AG04450 (cell line): ENCODE measurements at regions of chr2 and their contacts with region 1.

Region 1: DNA sequence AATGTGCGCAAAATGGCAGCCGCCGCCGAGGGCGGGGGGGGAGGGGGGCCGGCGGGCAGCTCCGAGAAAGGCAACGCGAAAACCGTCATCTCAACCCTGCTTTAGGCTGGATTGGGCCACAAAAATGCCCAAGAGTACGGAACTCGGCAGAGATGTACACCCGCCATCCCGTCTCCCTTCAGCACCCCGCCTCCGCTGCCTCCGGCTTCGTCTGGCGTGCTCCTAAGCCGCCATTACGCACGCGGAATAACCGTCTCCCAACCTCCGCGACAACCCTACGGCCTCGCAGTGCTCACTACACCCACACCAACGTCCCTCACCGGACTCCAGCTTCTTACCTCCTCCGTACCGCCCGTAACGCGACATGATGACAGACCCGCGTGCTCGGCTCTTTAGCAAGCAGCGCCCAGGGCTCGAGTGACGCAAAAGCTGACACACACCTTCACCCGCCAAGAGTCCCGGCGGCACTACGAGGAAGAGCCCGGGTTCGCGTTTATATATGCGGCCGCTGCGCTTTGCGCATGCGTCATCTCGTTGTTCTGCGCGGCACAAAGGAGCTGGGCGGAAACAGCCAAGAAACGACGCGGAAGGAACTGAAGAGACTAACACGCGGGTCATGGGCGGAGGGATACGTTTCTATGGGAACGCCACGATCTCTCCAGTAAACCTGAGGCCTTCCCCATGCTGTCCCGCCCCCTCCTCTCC is at the start of gene SRSF7:
- DNase-seq: peak; percentile 98
- H3K4me3 ChIP-seq: peak within 1 kb of the TSS; percentile 100
- H3K27ac ChIP-seq: peak within 1 kb of the TSS; percentile 85
- H3K27me3 ChIP-seq: no peaks in the 10 kb centered on the region
- CTCF ChIP-seq: no peak
- polyA plus RNA-seq, gene SRSF7: 195 and 238 TPM in 2 replicates

Region 2: DNA sequence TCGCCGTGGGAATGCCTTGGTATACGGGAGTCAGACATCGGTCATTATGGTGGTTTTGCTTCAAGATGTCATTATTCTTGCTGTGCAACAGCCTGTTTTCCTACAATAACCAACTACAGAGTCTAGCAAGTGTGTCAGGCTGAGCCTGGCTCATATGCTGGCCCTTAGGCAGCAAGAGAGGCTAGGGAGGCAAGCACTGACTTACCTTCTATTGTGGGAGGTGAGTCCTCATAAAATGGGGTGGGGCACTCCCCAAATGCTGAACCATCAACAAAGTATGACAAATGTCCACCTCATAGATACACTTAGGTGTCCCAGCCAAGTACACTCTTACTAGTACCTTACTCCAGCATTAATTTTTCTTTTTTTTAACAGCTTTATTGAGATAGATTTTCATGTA is 297.0 kb before region 1 on chr2:
- CTCF ChIA-PET with region 1: no interaction called
- POLR2A ChIA-PET with region 1: no interaction called
- DNase-seq: no peak
- H3K4me3 ChIP-seq: no peak overlapping the region
- H3K27ac ChIP-seq: no peak overlapping the region
- H3K27me3 ChIP-seq: peaks cover 35% of the 10 kb centered on the region
- CTCF ChIP-seq: no peak

Region 3: DNA sequence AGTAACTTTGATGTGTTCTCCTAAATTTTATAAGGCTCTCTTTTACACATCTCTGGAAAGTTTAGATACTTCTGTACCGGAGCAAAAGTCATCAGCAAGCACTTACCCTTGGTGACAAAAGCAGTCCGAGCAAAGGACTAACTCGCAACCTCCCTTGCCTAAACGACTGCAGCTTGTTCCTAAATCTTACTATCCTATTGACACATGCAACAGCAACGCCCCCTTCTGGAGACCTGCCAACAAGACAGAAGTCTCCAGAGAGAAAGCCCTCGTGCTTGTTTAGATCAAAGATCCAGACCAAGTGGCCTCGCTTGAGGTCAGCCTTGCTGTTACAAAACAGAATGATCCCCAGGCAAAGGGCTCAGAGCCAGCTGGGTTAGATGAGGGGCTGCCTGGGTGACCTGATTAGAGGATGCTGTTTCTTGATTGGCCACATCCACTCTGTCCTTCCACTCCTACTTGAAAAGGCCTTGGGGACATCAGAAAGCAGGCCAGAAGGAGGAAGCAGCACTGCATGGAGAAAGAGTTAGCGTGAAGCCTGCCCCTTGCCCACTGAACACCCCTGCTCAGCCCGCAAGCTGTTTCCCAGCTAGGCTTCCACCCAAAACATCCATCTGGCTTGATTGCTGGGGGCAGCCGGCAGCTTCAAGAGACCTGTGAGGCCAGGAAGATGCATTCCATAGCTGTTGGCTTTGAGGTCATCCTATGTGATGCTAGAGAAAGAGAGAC is 242.6 kb before region 1 on chr2:
- CTCF ChIA-PET with region 1: no interaction called
- POLR2A ChIA-PET with region 1: interaction called, 14 read pairs
- DNase-seq: no peak
- H3K4me3 ChIP-seq: no peak overlapping the region
- H3K27ac ChIP-seq: no peak overlapping the region
- H3K27me3 ChIP-seq: peaks cover 13% of the 10 kb centered on the region
- CTCF ChIP-seq: peak; percentile 28; the same call in 1 of the 2 replicates

Region 4: GRCh38 chr2:38590053-38590452 is 161.0 kb before region 1 on chr2:
- CTCF ChIA-PET with region 1: no interaction called
- POLR2A ChIA-PET with region 1: interaction called, 12 read pairs
- DNase-seq: no peak
- H3K4me3 ChIP-seq: no peak overlapping the region
- H3K27ac ChIP-seq: no peak overlapping the region
- H3K27me3 ChIP-seq: no peaks in the 10 kb centered on the region
- CTCF ChIP-seq: peak; percentile 36

Region 5: DNA sequence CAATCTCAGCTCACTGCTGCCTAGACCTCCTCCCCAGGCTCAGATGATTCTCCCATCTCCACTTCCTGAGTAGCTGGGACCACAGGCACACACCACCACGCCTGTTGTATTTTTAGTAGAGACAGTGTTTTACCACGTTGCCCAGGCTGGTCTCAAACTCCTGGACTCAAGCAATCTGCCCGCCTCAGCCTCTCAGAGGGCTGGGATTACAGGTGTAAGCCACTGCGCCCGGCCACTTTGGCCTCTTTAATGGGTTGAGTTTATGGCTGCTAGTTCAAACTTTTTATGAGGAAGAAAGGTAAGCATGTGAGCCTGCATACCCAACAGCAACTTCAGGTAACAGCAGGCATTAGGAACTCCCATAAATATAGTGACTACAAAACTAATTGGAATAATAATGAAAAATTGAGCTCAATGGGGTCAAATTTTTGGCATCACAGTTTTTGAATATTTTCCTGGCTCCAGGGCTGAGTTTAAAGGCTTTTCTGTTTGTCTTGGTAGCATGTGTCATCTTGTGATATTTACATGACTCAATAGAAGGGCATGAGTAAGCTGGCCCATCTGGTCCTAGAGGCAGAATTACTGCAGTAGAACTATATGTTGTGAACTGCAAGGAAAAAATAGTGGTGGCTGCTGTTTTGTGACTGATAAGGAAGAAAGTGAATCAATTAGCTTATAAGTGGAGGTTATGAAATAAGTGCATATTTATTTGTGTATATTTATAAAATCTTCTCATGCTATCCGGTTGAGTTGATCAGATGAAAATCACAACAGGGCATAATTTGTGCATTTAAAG is 60.3 kb before region 1 on chr2:
- CTCF ChIA-PET with region 1: no interaction called
- POLR2A ChIA-PET with region 1: interaction called, 12 read pairs
- DNase-seq: peak; percentile 84
- H3K4me3 ChIP-seq: no peak overlapping the region
- H3K27ac ChIP-seq: peak overlapping the region; percentile 90
- H3K27me3 ChIP-seq: no peaks in the 10 kb centered on the region
- CTCF ChIP-seq: no peak

Region 6: DNA sequence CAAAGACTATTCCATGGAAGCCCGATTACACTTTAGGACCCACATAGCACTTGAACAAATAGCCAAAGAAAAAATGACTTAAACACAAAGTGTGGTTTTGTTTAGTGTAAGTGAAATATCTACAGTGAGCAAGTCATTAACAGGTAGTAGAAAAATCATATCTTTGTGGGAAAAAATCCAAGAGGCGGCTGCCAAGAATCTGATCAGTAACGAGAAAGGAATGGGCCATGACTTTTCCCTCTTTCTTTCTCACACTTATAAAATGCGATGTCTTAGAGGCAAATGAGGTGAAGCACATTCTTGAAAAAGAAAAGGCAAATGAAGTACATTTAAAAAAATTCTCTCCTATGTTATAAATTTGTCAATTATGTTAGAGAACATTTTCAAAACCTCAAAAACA is 14.1 kb after region 1 on chr2:
- CTCF ChIA-PET with region 1: no interaction called
- POLR2A ChIA-PET with region 1: interaction called, 44 read pairs
- DNase-seq: peak; percentile 32
- H3K4me3 ChIP-seq: no peak overlapping the region
- H3K27ac ChIP-seq: no peak overlapping the region
- H3K27me3 ChIP-seq: no peaks in the 10 kb centered on the region
- CTCF ChIP-seq: no peak

Region 7: GRCh38 chr2:38806015-38806732 is 55.1 kb after region 1 on chr2:
- CTCF ChIA-PET with region 1: no interaction called
- POLR2A ChIA-PET with region 1: interaction called, 11 read pairs
- DNase-seq: no peak
- H3K4me3 ChIP-seq: no peak overlapping the region
- H3K27ac ChIP-seq: no peak overlapping the region
- H3K27me3 ChIP-seq: no peaks in the 10 kb centered on the region
- CTCF ChIP-seq: no peak

Region 8: DNA sequence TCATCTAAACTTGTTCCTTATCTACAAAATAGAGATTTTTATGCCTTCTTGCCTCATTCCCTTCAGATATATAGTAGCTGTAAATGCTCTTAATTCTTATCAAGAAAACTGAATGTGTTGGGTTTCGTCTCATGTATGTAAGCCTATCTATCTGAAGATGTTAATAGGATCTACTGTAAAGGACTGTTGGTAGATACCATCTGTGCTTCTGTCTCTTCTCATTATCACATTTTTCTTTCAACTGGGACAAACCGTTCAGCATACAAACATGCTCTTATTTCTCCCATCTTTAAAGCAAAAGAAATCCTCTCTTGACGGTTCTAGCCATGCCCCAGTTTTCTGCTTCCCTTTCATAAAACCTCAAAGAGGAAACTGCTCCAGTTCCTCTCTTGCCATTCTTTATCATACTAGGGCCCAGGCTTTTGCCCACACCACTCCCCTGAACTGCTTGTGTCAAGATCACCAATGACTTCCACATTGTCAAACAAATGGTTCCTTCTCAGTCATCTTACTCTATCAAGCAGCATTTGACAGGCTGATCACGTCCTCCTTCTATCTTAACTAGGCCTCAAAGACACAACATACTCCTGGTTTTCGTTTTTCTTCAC is 227.4 kb after region 1 on chr2:
- CTCF ChIA-PET with region 1: no interaction called
- POLR2A ChIA-PET with region 1: no interaction called
- DNase-seq: no peak
- H3K4me3 ChIP-seq: no peak overlapping the region
- H3K27ac ChIP-seq: no peak overlapping the region
- H3K27me3 ChIP-seq: no peaks in the 10 kb centered on the region
- CTCF ChIP-seq: no peak